HepG2 (cell line): ENCODE measurements at regions of chr6 and their contacts with region 1.

Region 1: DNA sequence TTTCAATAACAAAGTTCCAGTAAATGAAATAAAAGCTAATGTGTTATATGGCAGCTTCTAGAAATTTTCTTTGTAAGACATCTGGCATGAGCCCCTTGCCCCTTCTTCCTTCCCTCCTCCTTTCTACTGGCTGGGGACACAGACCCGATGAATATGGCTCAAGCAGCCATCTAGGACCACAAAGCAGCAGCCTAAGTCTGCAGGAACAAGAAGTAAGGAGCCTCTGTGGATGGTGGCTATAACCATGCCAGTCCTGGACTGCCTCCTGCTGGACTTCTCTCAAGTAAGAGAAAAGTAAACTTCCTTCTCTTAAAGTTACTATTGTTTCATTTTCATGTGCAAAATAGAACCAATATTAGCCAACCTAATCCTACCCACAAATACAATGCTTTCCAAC is 114.9 kb upstream of the DST start:
- DNase-seq: peak; percentile 72
- ATAC-seq: peak; percentile 97
- H3K4me3 ChIP-seq: no peak overlapping the region
- H3K27ac ChIP-seq: no peak overlapping the region
- H3K4me1 ChIP-seq: no peaks in the 10 kb centered on the region; the same call in 1 of the 2 replicates
- H3K27me3 ChIP-seq: no peaks in the 10 kb centered on the region
- CTCF ChIP-seq: peak; percentile 93
- EP300 ChIP-seq: no peak
- POLR2A ChIP-seq: no peak
- RAD21 ChIP-seq: peak; percentile 91

Region 2: GRCh38 chr6:56699066-56699654 is 58.4 kb before region 1 on chr6:
- CTCF ChIA-PET with region 1: interaction called, 10 read pairs
- POLR2A ChIA-PET with region 1: no interaction called
- in situ Hi-C with region 1: no loop called
- intact Hi-C with region 1: no loop called
- DNase-seq: peak; percentile 43
- ATAC-seq: peak; percentile 54; the same call in 2 of the 3 replicates
- H3K4me3 ChIP-seq: no peak overlapping the region
- H3K27ac ChIP-seq: no peak overlapping the region
- H3K4me1 ChIP-seq: no peaks in the 10 kb centered on the region
- H3K27me3 ChIP-seq: no peaks in the 10 kb centered on the region
- CTCF ChIP-seq: peak; percentile 68
- EP300 ChIP-seq: no peak
- POLR2A ChIP-seq: no peak
- RAD21 ChIP-seq: peak; percentile 40; the same call in 1 of the 2 replicates

Region 3: GRCh38 chr6:56851541-56852259 is 94.1 kb after region 1 on chr6:
- CTCF ChIA-PET with region 1: no interaction called
- POLR2A ChIA-PET with region 1: no interaction called
- in situ Hi-C with region 1: no loop called
- intact Hi-C with region 1: loop called (anchors 5 kb)
- DNase-seq: peak; percentile 72
- ATAC-seq: peak; percentile 98
- H3K4me3 ChIP-seq: no peak overlapping the region
- H3K27ac ChIP-seq: no peak overlapping the region
- H3K4me1 ChIP-seq: no peaks in the 10 kb centered on the region
- H3K27me3 ChIP-seq: no peaks in the 10 kb centered on the region
- CTCF ChIP-seq: peak; percentile 82
- EP300 ChIP-seq: no peak
- POLR2A ChIP-seq: no peak
- RAD21 ChIP-seq: peak; percentile 66

Region 4: DNA sequence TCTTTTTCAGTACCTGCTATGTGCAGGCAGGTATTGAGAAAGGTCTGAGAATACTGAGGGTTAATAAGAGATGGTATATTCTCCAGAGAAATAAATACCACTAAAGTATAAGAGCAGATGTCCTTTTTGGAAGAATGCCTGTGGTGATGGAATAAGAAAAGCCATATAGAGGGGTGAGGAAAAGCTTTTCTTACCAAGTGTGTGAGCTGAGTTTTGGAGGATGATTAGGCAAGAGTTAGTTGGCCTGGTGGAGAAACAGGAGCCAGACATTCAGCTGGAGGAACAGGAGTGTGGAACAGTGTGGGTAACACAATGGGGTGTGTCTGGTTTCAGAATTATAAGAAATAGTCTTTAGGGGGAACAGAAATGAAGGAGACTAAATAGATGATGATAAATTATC is 352.3 kb after region 1 on chr6:
- CTCF ChIA-PET with region 1: no interaction called
- POLR2A ChIA-PET with region 1: no interaction called
- in situ Hi-C with region 1: no loop called
- intact Hi-C with region 1: no loop called
- DNase-seq: no peak
- ATAC-seq: no peak; the same call in 2 of the 3 replicates
- H3K4me3 ChIP-seq: no peak overlapping the region
- H3K27ac ChIP-seq: no peak overlapping the region
- H3K4me1 ChIP-seq: peaks cover 71% of the 10 kb centered on the region
- H3K27me3 ChIP-seq: no peaks in the 10 kb centered on the region
- CTCF ChIP-seq: no peak
- EP300 ChIP-seq: no peak
- POLR2A ChIP-seq: no peak
- RAD21 ChIP-seq: no peak